Activated CD8-positive, alpha-beta T cell treated with anti-CD3 and anti-CD28 coated beads for 36 hours (primary cell): ENCODE measurements at regions of chr4 and their contacts with region 1.

Region 1: DNA sequence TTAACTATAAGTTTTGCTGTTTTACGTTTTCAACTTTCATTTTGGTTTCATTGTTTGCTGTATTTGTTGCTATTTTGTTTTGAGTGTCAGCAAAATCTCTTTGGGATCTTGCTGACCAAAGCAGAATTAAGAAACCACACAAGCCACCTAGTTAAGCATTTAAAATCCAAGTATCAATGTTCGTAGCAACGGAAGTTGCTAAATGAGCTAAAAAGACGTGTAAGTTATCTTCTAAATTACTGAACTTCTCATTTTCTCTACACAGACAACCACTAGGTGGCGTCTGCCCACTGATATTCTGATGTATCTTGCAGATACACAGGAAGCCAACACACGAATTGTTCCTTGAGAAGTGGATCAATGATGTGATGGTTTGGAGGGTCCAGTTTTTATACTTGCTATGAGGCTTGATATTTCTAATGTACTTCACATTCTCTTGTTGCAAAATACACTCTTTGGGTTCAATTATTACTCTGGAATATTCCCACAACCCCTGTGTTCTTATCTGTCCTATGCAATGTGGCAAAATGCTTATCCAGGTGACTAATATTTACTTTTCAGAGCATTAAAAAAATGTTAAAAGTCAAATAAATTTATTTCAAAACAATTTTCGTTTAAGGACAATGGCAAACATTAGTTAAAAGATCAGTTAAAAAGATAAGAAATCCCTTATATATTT is 250.5 kb downstream of the TECRL start:
- DNase-seq: peak; percentile 74
- ATAC-seq: peak; percentile 27
- H3K4me3 Mint-ChIP-seq: no peak overlapping the region
- H3K27ac Mint-ChIP-seq: no peak overlapping the region
- H3K4me1 Mint-ChIP-seq: peaks cover 3% of the 10 kb centered on the region
- H3K27me3 Mint-ChIP-seq: no peaks in the 10 kb centered on the region
- CTCF ChIP-seq: peak; percentile 57

Region 2: GRCh38 chr4:64539234-64539849 is 380.6 kb after region 1 on chr4:
- CTCF ChIA-PET with region 1: interaction called, 14 read pairs
- POLR2A ChIA-PET with region 1: no interaction called
- intact Hi-C with region 1: loop called (anchors 5 kb)
- DNase-seq: peak; percentile 49
- ATAC-seq: no peak
- H3K4me3 Mint-ChIP-seq: no peak overlapping the region
- H3K27ac Mint-ChIP-seq: no peak overlapping the region
- H3K4me1 Mint-ChIP-seq: no peaks in the 10 kb centered on the region
- H3K27me3 Mint-ChIP-seq: no peaks in the 10 kb centered on the region
- CTCF ChIP-seq: peak; percentile 69